Vagina (tissue), 2 donors: ENCODE measurements at regions of chr16 and their contacts with region 1.

Region 1: GRCh38 chr16:24729985-24730815 is 749 bp downstream of the TNRC6A start:
- DNase-seq: no peak
- H3K4me3 ChIP-seq: peak overlapping the region; percentile 79 to 97
- H3K27ac ChIP-seq: peak overlapping the region; percentile 92
- H3K4me1 ChIP-seq: peaks cover 51% of the 10 kb centered on the region
- H3K27me3 ChIP-seq: no peaks in the 10 kb centered on the region
- CTCF ChIP-seq: no peak
- POLR2A ChIP-seq: no peak

Region 2: GRCh38 chr16:23795378-23795777 is 934.8 kb before region 1 on chr16:
- intact Hi-C with region 1: loop called (anchors 5 kb)
- DNase-seq: no peak
- H3K4me3 ChIP-seq: no peak overlapping the region
- H3K27ac ChIP-seq: no peak overlapping the region
- H3K4me1 ChIP-seq: no peaks in the 10 kb centered on the region
- H3K27me3 ChIP-seq: no peaks in the 10 kb centered on the region
- CTCF ChIP-seq: no peak
- POLR2A ChIP-seq: no peak

Region 3: DNA sequence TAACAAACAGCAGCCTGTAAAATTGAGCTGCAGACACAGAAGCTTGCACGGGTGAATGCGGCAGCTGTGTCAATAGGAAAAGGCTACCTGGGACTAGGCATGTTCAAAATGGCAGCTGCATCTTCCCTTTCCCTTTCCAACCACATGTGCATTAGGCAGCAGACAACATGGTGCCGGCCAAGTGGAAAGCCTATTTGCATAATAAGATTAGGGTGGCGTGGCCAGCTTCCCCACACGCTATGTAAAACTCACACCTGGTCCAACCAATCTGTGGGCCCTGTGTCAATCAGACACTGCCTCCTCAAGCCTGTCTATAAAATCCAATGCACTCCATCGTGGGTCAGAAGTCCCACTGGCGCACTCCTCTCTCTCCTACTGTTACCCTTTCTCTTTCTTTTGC is 251.8 kb before region 1 on chr16:
- intact Hi-C with region 1: no loop called
- DNase-seq: no peak
- H3K4me3 ChIP-seq: no peak overlapping the region
- H3K27ac ChIP-seq: no peak overlapping the region
- H3K4me1 ChIP-seq: no peaks in the 10 kb centered on the region
- H3K27me3 ChIP-seq: no peaks in the 10 kb centered on the region
- CTCF ChIP-seq: no peak
- POLR2A ChIP-seq: no peak